K562 (cell line): ENCODE measurements at regions of chr10 and their contacts with region 1.

Region 1: DNA sequence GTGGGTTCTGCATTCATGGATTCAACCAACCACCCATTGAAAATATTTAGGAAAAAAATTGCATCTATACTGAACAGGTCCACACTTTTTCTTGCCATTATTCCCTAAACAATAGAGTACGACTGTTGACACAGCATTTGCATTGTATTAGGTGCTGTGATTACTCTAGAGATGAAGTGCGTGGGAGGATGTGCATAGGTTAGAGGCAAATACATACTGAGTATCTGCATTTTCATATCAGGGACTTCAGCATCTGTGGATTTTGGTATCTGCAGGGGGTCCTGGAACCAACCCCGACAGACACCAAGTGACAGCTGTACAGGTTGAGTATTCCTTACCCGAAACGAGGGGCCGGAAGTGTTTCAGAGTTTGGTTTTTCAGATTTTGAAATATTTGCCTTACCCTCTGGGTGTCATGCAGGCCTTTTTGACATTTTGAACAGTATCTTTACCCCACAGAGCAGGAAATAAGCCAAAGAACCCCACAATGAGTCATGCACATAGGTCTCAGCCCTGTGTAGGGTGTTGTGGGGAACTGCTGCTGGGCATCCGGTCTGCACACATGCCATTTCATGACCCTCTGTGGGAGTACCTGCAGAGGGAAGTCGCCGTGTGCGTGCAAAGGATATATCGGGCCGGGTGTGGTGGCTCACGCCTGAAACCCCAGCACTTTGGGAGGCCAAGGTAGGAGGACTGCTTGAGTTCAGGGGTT is 14.5 kb downstream of the NUDT5 start:
- DNase-seq: no peak
- ATAC-seq: no peak
- H3K4me3 ChIP-seq: no peak overlapping the region
- H3K27ac ChIP-seq: no peak overlapping the region
- H3K4me1 ChIP-seq: no peaks in the 10 kb centered on the region
- H3K27me3 ChIP-seq: no peaks in the 10 kb centered on the region
- CTCF ChIP-seq: no peak
- EP300 ChIP-seq: no peak
- POLR2A ChIP-seq: 0 out of 2 replicates have a peak, but pooled peaks have one; percentile 17
- RAD21 ChIP-seq: no peak

Region 2: GRCh38 chr10:12195603-12196506 is 14.6 kb after region 1 on chr10 and contains the starts of genes CDC123 and NUDT5:
- CTCF ChIA-PET with region 1: no interaction called
- POLR2A ChIA-PET with region 1: interaction called, 11 read pairs
- in situ Hi-C with region 1: no loop called
- intact Hi-C with region 1: no loop called
- DNase-seq: peak; percentile 79 to 91 (median 84)
- ATAC-seq: peak; percentile 94
- H3K4me3 ChIP-seq: peak within 1 kb of the TSS; percentile 95
- H3K27ac ChIP-seq: peak within 1 kb of the TSS; percentile 95
- H3K4me1 ChIP-seq: peaks cover 8% of the 10 kb centered on the region in 2 experiments; a peak in 3 of 5 replicates
- H3K27me3 ChIP-seq: no peaks in the 10 kb centered on the region
- CTCF ChIP-seq: peak in 1 of 3 experiments; percentile 11; a peak in 1 of 6 replicates
- EP300 ChIP-seq: peak; percentile 41
- POLR2A ChIP-seq: peak; percentile 90
- RAD21 ChIP-seq: peak in 1 of 2 experiments; percentile 14; a peak in 1 of 4 replicates
- polyA plus RNA-seq, gene CDC123: 153 to 223 TPM
- polyA plus RNA-seq, gene NUDT5: 400 to 422 TPM